ENCODE measurements at regions of chr6 and their contacts with region 1.

Region 1: DNA sequence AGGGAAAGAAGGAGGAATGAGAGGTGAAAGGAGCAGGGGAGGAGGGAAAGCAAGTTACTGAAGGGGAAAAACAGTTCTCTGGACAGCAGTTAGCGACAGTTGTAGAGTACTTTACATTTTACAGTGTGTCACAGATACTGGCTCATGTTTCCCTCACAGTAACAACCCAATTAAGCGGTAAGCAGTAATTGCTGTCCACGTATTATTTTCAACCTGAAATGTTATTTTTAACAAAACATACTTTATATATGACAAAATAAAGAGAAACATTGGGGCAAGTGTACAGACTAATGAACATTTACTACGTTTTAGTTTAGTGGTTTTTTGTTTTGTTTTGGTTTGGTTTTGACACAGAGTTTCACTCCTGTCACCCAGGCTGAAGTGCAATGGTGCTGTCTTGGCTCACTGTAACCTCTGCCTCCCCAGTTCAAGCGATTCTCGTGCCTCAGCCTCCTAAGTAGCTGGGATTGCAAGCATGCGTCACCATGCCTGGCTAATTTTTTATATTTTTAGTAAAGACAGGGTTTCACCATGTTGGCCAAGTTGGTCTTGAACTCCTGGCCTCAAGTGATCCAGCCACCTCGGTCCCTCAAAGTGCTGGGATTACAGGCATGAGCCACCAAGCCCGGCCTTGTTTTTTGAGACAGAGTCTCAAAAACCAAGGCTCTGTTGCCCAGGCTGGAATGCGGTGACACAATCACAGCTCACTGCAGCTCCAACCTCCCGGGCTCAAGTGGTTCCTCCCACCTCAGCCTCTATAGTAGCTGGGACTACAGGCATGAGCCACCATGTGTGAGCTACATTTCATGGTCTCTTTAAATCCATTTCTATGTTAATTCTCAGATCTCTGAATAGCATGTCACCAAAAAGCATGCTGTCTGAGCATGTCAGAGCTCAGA is 22.6 kb upstream of the BTN3A2 start:
- DNase-seq: no peak
- H3K4me3 ChIP-seq: peak overlapping the region; percentile 37
- CTCF ChIP-seq: no peak

Region 2: GRCh38 chr6:26331218-26332073 is 10.9 kb before region 1 on chr6:
- CTCF ChIA-PET with region 1: interaction called, 26 read pairs
- POLR2A ChIA-PET with region 1: no interaction called
- DNase-seq: no peak
- H3K4me3 ChIP-seq: peak overlapping the region; percentile 63
- CTCF ChIP-seq: no peak

Region 3: GRCh38 chr6:26493258-26493657 is 150.9 kb after region 1 on chr6:
- CTCF ChIA-PET with region 1: interaction called, 14 read pairs
- POLR2A ChIA-PET with region 1: no interaction called
- DNase-seq: no peak
- H3K4me3 ChIP-seq: no peak overlapping the region
- CTCF ChIP-seq: peak; percentile 13

Region 4: GRCh38 chr6:26537846-26538571 is 195.7 kb after region 1 on chr6 and contains the start of gene HMGN4:
- CTCF ChIA-PET with region 1: interaction called, 12 read pairs
- POLR2A ChIA-PET with region 1: interaction called, 5 read pairs
- DNase-seq: no peak
- H3K4me3 ChIP-seq: peak within 1 kb of the TSS; percentile 78
- CTCF ChIP-seq: no peak

Region 5: GRCh38 chr6:26576929-26577719 is 234.8 kb after region 1 on chr6:
- CTCF ChIA-PET with region 1: interaction called, 16 read pairs
- POLR2A ChIA-PET with region 1: no interaction called
- DNase-seq: no peak
- H3K4me3 ChIP-seq: peak overlapping the region; percentile 60
- CTCF ChIP-seq: no peak

Region 6: GRCh38 chr6:26659042-26659999 is 317.0 kb after region 1 on chr6 and contains the start of gene ZNF322:
- CTCF ChIA-PET with region 1: no interaction called
- POLR2A ChIA-PET with region 1: no interaction called
- DNase-seq: peak; percentile 62
- H3K4me3 ChIP-seq: peak within 1 kb of the TSS; percentile 88
- CTCF ChIP-seq: no peak